Lower leg skin (tissue), 4 donors: ENCODE measurements at regions of chr4 and their contacts with region 1.

Region 1: GRCh38 chr4:76499461-76499860 is 64.4 kb downstream of the SHROOM3 start:
- DNase-seq: no peak
- H3K4me3 ChIP-seq: no peak overlapping the region
- CTCF ChIP-seq: no peak
- POLR2A ChIP-seq: no peak

Region 2: GRCh38 chr4:76179398-76180318 is 319.8 kb before region 1 on chr4:
- intact Hi-C with region 1: loop called (anchors 10 kb)
- DNase-seq: peak; percentile 78 to 96
- H3K4me3 ChIP-seq: no peak overlapping the region
- CTCF ChIP-seq: peak in 1 of 3 donors; percentile 44
- POLR2A ChIP-seq: no peak

Region 3: DNA sequence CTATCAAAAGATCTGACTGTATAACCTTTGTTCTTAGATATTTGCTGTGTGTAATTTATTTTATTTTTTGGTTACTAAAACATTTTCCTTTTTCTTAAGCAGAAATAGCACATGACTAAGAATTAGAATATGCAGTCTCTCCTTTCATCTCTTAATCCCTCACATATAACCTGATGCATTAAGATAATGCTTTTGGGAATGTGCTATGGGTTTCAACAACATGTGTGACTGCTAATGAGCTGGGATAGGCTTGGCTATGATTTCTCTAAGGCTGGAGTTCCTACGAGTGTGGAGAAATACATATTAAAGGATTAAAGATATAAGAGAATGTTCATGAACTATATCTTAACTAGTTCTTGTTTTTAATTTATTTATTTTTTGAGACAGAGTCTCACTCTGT is 22.9 kb before region 1 on chr4:
- intact Hi-C with region 1: no loop called
- DNase-seq: no peak
- H3K4me3 ChIP-seq: no peak overlapping the region
- CTCF ChIP-seq: no peak
- POLR2A ChIP-seq: no peak

Region 4: GRCh38 chr4:77443941-77444340 is 944.5 kb after region 1 on chr4:
- intact Hi-C with region 1: no loop called
- DNase-seq: no peak
- H3K4me3 ChIP-seq: no peak overlapping the region
- CTCF ChIP-seq: no peak
- POLR2A ChIP-seq: no peak